Psoas muscle (tissue), 8 donors: ENCODE measurements at regions of chr12 and their contacts with region 1.

Region 1: GRCh38 chr12:1367331-1368291 is 226.8 kb downstream of the FBXL14 start:
- DNase-seq: no peak
- ATAC-seq: no peak
- H3K4me3 ChIP-seq: no peak overlapping the region
- H3K27ac ChIP-seq: peak overlapping the region; percentile 77
- H3K4me1 ChIP-seq: peaks cover 28% of the 10 kb centered on the region
- H3K27me3 ChIP-seq: no peaks in the 10 kb centered on the region
- CTCF ChIP-seq: no peak

Region 2: GRCh38 chr12:1282670-1283335 is 84.8 kb before region 1 on chr12:
- intact Hi-C with region 1: no loop called
- DNase-seq: no peak
- ATAC-seq: peak in 1 of 4 donors; percentile 62
- H3K4me3 ChIP-seq: no peak overlapping the region
- H3K27ac ChIP-seq: no peak overlapping the region
- H3K4me1 ChIP-seq: peaks cover 17% of the 10 kb centered on the region
- H3K27me3 ChIP-seq: no peaks in the 10 kb centered on the region
- CTCF ChIP-seq: no peak

Region 3: DNA sequence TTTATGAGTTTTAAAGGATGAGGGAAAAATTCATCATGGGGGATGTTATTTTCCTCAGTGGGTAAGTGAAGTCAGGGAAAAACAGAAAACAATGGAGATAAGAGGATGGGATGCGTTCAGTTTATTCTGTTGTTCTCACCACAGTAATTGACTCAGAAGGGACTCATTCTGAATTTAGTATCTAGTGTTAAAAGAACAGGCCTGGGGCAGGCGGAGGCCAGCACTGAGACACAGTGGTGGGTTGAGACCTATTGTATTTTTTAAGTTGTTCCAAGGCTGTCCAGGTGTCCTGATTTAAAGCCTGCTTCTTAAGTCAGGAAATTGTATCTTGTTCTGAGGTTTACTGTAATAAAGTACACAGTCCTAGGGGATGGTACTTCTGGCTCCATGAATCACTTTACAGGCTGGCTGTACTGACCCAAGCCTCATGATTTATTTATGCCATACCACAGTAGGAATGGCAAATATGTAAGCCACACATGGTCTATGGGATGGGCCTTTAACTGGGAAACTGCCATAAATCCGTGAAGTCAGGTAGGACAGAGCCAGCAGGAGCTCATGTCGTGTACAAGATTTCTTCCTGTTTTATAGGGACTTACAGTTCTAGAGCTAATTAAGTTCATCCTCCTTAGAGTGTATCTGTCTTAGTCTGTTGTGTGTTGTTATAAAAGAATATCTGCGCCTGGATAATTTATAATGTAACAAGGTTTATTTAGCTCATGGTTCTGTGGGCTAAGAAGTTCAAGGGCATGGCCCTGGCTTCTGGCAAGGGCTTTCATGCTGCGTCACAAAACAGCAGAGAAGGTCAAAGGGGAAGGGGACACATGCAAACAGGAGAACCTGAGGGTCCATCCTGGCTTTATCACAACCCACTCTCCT is 17.3 kb before region 1 on chr12:
- intact Hi-C with region 1: loop called in 1 of 2 experiments (anchors 2 kb)
- DNase-seq: no peak
- ATAC-seq: peak; percentile 78 to 97 (median 96)
- H3K4me3 ChIP-seq: no peak overlapping the region
- H3K27ac ChIP-seq: peak overlapping the region; percentile 64
- H3K4me1 ChIP-seq: peaks cover 4% of the 10 kb centered on the region
- H3K27me3 ChIP-seq: no peaks in the 10 kb centered on the region
- CTCF ChIP-seq: no peak

Region 4: DNA sequence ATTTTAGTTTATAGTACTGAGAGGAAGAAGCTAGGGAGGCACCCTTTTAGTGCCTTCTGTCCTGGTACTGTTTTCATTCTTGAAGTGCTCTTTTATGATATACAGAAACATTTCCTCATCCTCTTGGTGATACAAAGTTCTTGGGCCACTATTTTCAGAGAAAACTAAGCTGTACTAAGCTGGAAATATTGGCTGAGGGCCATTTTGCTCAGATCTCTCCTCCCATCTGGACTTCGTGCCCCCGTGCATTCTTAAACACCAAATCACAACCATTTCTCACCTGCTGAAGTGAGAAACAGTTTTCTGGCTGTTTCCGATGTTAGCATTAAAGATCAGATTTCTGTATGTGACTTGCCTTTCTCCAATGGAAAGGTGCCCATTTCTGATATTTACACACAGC is 67.8 kb after region 1 on chr12:
- intact Hi-C with region 1: no loop called
- DNase-seq: no peak
- ATAC-seq: no peak
- H3K4me3 ChIP-seq: no peak overlapping the region
- H3K27ac ChIP-seq: no peak overlapping the region
- H3K4me1 ChIP-seq: no peaks in the 10 kb centered on the region
- H3K27me3 ChIP-seq: no peaks in the 10 kb centered on the region
- CTCF ChIP-seq: no peak